Pancreas (tissue), 10 donors: ENCODE measurements at regions of chr11 and their contacts with region 1.

Region 1: DNA sequence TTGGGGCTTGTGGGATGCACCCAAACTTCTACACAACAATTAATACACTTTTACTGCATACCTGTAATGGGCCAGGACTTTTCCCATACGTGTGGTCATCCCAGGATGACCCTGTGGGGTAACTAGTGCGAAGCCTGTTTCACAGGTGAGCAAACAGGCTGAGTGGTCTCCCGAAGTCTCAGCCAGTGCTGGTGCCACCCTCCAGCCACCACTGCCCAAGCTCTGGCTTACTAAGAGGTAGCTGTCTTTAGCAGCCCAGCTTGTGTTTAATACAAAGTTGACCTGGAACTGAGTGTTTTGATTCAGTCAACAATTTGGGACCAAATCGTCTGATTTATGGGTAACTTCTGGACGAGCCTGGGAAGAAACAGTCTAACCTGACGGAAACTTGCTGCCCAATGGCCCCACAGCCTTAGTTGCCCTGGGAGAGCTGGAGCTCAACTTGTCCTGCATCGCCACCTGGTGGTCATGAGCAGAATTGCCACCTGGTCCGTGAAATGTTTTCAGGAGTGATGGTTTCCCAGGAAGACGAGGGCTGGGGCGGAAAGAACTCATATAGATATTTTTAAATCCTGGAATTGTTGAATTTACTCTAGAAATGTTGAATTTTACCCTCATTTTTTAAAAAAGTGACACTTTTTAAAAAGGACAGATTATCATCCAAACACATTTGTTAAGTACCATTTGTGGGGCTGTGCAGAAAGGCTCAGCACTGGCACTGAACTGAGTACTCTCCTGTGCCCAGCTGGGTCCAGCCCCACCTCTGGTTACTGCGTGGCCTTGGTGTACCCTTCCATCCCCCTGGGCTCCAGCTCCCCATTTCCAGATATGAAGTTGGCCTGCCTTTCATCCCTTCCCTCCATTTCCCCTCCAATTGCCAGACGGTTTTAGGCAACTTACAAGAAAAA is 95.5 kb upstream of the PARVA start:
- DNase-seq: peak; percentile 73 to 93 (median 88)
- ATAC-seq: peak; percentile 77 to 90 (median 88)
- H3K4me3 ChIP-seq: no peak overlapping the region
- H3K27ac ChIP-seq: no peak overlapping the region
- H3K4me1 ChIP-seq: peaks cover 0 to 4% (median 3%) of the 10 kb centered on the region in 3 donors
- H3K27me3 ChIP-seq: no peaks in the 10 kb centered on the region
- CTCF ChIP-seq: peak; percentile 89 to 96 (median 89)

Region 2: DNA sequence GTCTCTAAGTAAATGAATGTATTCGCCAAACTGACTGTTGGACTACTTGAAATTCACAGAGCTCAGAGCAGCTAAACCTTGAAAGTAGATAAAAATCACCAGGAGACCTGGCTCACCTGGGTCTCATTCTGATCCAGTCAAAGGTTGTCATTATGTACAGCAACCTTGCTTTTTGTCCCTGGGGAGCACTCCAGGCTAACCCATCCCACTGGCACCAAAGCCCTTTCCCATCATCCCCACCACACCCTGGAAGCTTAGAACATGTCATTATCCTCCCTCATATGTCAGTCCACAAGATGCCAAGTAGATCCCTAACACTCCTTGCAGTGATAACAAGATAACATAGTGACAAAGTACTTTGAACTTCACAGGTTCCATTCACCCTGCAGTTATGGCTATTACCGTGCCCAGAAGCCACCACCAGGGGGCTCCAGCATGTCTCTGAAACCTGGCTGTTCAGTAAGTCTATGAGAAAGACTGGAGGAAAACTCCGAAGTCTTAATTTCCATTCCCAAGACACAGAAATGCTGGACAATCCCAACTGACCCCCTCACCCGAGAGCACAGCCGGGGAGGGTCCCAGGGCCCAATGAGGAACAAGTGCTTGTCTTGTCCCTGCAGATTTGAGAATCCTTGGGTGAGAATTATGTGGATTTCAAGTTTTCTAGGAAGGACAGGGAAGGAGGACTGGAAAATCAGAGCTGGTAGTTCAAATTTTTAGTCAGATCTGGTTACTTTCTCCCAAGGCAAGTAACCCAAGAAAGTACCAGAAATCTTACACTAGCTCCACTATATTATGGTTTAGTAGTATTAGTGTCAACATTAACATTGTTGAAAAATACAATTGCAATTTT is 483.0 kb before region 1 on chr11:
- intact Hi-C with region 1: loop called in 1 of 3 experiments (anchors 5 kb)
- DNase-seq: peak; percentile 33 to 88 (median 84)
- ATAC-seq: peak; percentile 82 to 100 (median 98)
- H3K4me3 ChIP-seq: no peak overlapping the region
- H3K27ac ChIP-seq: no peak overlapping the region
- H3K4me1 ChIP-seq: no peaks in the 10 kb centered on the region
- H3K27me3 ChIP-seq: no peaks in the 10 kb centered on the region
- CTCF ChIP-seq: peak; percentile 56 to 92 (median 86)

Region 3: GRCh38 chr11:12813371-12814225 is 531.8 kb after region 1 on chr11:
- intact Hi-C with region 1: no loop called
- DNase-seq: no peak
- ATAC-seq: peak in 3 of 4 donors; percentile 14 to 30 (median 23)
- H3K4me3 ChIP-seq: no peak overlapping the region
- H3K27ac ChIP-seq: peak overlapping the region in 2 of 4 donors; percentile 25 to 55
- H3K4me1 ChIP-seq: peaks cover 0 to 5% (median 0%) of the 10 kb centered on the region in 3 donors
- H3K27me3 ChIP-seq: no peaks in the 10 kb centered on the region
- CTCF ChIP-seq: no peak